ENCODE measurements at regions of chr11 and their contacts with region 1.

Region 1: DNA sequence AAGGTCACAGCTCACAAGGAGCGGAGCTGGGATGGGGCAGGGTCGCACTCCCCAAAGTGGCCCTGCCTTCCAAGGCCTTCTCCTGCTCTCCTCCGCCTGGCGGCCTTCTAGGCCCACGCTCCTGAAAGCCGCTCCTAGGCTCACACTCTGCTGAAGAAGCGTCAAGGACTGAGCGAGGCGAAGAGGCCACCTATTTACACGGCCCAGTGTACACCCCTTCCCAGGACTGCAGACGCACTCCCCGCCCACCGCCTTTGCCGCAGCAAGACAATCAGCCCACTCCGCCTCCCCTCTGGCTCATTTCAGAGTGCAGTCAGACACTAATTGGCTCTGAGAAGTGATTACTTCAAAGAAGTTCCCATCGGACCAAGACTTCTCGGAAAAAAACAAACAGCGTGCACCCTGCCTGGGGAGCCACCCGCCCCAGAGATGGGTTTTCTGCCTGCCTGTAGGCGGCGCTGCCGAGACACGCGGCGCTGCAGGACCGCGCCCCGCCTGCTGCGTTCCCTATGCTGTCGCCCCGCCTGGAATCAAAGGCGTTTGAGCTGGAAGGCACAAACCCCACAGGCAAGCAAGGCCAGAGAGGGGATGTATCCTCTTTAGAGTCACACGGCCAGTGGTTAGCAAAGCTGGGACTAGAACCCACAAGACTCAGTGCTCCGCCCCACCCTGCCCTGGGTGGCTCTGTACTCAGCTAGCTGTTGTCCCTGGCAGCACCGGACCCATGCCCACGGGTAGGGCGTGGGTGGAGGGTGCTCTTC is 414.8 kb downstream of the BUD13 start:
- DNase-seq: peak; percentile 83
- ATAC-seq: peak; percentile 89
- H3K4me3 Mint-ChIP-seq: no peak overlapping the region
- H3K27ac Mint-ChIP-seq: 0 out of 2 replicates have a peak overlapping the region, but pooled peaks have one; percentile 34
- H3K4me1 Mint-ChIP-seq: peaks cover 51% of the 10 kb centered on the region
- H3K27me3 Mint-ChIP-seq: peaks cover 5% of the 10 kb centered on the region; the same call in 1 of the 2 replicates
- CTCF ChIP-seq: peak; percentile 92

Region 2: DNA sequence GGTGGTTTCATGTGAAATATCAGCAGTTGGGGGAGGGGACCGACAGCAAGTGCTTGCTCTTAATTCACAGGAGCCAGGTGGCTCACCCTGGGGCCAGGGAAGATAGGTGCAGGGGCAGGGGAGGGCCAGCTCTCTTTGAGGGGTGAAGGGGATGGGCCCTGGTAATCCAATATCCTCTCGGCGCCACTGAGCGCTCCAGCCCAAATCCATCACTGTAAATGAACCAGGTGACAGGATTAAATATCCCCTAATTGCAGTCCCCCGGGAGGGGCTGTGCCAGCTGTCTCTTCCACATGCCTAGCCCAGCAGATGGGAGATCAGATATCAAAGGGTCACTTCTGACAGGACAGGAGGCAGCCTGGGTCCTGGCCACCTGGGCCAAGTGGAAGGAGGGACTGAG is 322.0 kb before region 1 on chr11:
- CTCF ChIA-PET with region 1: no interaction called
- POLR2A ChIA-PET with region 1: no interaction called
- DNase-seq: no peak
- ATAC-seq: no peak; the same call in 1 of the 2 replicates
- H3K4me3 Mint-ChIP-seq: no peak overlapping the region
- H3K27ac Mint-ChIP-seq: no peak overlapping the region
- H3K4me1 Mint-ChIP-seq: peaks cover 31% of the 10 kb centered on the region
- H3K27me3 Mint-ChIP-seq: no peaks in the 10 kb centered on the region; the same call in 1 of the 2 replicates
- CTCF ChIP-seq: no peak

Region 3: GRCh38 chr11:116263017-116263416 is 94.9 kb before region 1 on chr11:
- CTCF ChIA-PET with region 1: no interaction called
- POLR2A ChIA-PET with region 1: no interaction called
- DNase-seq: no peak
- ATAC-seq: no peak; the same call in 1 of the 2 replicates
- H3K4me3 Mint-ChIP-seq: no peak overlapping the region
- H3K27ac Mint-ChIP-seq: no peak overlapping the region
- H3K4me1 Mint-ChIP-seq: peaks cover 12% of the 10 kb centered on the region
- H3K27me3 Mint-ChIP-seq: no peaks in the 10 kb centered on the region; the same call in 1 of the 2 replicates
- CTCF ChIP-seq: no peak

Region 4: GRCh38 chr11:116281173-116282160 is 76.5 kb before region 1 on chr11:
- CTCF ChIA-PET with region 1: interaction called, 19 read pairs
- POLR2A ChIA-PET with region 1: no interaction called
- DNase-seq: no peak
- ATAC-seq: peak; percentile 66
- H3K4me3 Mint-ChIP-seq: no peak overlapping the region
- H3K27ac Mint-ChIP-seq: no peak overlapping the region
- H3K4me1 Mint-ChIP-seq: no peaks in the 10 kb centered on the region; the same call in 1 of the 2 replicates
- H3K27me3 Mint-ChIP-seq: no peaks in the 10 kb centered on the region
- CTCF ChIP-seq: no peak

Region 5: DNA sequence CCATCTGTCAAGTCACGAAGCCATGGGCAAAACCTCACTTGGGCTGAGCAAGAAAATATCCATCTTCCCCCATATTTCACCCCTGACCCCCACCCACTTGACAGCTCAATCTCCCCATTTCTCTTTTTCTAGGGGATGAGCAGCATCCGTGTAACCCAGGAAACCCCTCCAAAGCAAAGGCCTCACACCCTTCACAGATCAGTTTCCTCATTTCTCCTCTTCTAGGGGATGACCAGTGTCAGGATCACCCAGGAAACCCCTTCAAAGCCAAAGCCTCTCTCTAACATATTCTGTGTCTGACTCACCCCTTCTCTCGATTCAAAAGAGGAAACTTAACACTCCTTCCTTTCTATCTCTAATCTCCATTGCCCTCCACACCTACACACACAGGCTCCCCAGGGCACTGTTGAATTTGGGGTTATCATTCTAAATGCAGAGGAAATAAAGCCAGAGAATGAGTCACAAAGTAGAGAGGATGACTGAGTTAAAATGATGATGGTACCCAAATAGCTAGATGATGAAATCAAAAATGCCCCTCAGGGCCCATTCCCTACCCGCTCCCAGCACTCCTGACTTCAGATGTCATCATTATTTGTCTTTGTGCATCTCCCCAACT is 24.9 kb before region 1 on chr11:
- CTCF ChIA-PET with region 1: no interaction called
- POLR2A ChIA-PET with region 1: no interaction called
- DNase-seq: no peak
- ATAC-seq: no peak
- H3K4me3 Mint-ChIP-seq: no peak overlapping the region
- H3K27ac Mint-ChIP-seq: no peak overlapping the region
- H3K4me1 Mint-ChIP-seq: peaks cover 19% of the 10 kb centered on the region
- H3K27me3 Mint-ChIP-seq: peaks cover 3% of the 10 kb centered on the region; the same call in 1 of the 2 replicates
- CTCF ChIP-seq: no peak

Region 6: GRCh38 chr11:116373104-116373944 is 15.4 kb after region 1 on chr11:
- CTCF ChIA-PET with region 1: interaction called, 23 read pairs
- POLR2A ChIA-PET with region 1: no interaction called
- DNase-seq: no peak
- ATAC-seq: no peak
- H3K4me3 Mint-ChIP-seq: no peak overlapping the region
- H3K27ac Mint-ChIP-seq: no peak overlapping the region
- H3K4me1 Mint-ChIP-seq: peaks cover 17% of the 10 kb centered on the region
- H3K27me3 Mint-ChIP-seq: no peaks in the 10 kb centered on the region
- CTCF ChIP-seq: no peak

Region 7: DNA sequence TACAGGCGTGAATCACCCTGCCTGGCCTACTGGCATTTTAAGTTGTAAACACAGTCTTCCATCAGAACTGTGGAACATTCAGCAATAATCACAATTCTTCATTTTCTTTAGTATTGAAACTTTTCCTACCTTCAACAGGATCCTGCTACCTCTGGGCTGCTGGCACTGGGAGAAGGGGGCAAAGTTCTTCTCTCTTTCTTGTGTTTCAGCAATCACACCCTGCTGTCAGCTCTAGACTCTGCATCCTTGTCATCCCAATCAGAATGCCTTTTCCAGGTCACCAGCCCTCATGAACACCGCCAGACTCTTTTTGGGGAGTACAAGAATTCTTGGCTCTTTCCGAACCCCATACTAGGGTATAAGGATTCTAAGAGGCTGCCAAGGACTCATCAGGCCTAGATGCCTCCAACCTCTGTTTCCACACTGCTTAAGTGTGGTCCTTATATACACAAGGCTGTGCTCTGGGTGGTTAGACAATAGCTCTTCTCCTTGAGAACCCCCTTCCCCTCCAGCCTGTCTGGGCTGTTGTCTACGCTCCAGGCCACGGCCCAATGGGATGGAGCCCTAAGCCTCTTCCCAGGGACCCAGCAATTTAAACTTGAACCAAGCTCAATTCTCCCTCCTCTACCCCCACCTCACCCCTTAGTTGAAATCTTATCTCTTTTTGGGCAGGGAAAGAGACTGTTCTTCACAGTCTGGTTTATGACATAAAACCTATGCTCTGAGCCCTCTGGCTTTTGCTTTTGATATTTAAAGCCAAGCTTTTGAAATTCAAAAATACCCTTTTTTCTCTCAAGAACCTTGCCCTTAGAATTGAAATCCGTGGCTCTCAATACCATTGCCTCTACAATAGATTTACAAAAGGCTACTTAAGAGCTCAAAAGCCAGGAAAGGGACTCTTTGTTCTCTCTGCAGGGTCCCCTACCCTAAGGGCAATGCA is 87.4 kb after region 1 on chr11:
- CTCF ChIA-PET with region 1: interaction called, 22 read pairs
- POLR2A ChIA-PET with region 1: no interaction called
- DNase-seq: peak; percentile 53
- ATAC-seq: peak; percentile 94
- H3K4me3 Mint-ChIP-seq: peak overlapping the region; percentile 53
- H3K27ac Mint-ChIP-seq: peak overlapping the region; percentile 96
- H3K4me1 Mint-ChIP-seq: peaks cover 54% of the 10 kb centered on the region
- H3K27me3 Mint-ChIP-seq: peaks cover 4% of the 10 kb centered on the region
- CTCF ChIP-seq: no peak

Region 8: DNA sequence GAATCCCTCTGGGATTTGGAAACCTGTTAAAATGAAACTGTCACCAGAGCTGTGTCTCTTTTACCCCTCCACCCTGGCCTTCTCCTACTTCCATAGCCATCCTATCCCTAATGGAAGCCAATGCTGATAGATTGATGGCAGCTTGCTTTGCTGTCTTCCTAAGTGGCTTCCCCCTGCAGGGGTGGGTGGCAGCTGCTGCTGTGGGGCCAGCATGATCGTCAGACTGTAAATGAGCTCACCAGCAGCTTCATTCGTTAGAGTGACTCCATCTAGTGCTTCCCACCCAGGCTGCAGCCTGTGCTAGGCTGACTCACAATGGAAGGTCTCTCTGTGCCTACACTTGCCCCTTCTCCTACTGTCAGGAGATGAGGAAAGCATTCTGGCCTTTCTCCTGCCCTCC is 103.8 kb after region 1 on chr11:
- CTCF ChIA-PET with region 1: interaction called, 17 read pairs
- POLR2A ChIA-PET with region 1: no interaction called
- DNase-seq: no peak
- ATAC-seq: peak; percentile 86
- H3K4me3 Mint-ChIP-seq: no peak overlapping the region
- H3K27ac Mint-ChIP-seq: no peak overlapping the region; the same call in 1 of the 2 replicates
- H3K4me1 Mint-ChIP-seq: peaks cover 53% of the 10 kb centered on the region
- H3K27me3 Mint-ChIP-seq: peaks cover 4% of the 10 kb centered on the region; the same call in 1 of the 2 replicates
- CTCF ChIP-seq: no peak